Naive thymus-derived CD4-positive, alpha-beta T cell (primary cell): ENCODE measurements at regions of chr12 and their contacts with region 1.

Region 1: DNA sequence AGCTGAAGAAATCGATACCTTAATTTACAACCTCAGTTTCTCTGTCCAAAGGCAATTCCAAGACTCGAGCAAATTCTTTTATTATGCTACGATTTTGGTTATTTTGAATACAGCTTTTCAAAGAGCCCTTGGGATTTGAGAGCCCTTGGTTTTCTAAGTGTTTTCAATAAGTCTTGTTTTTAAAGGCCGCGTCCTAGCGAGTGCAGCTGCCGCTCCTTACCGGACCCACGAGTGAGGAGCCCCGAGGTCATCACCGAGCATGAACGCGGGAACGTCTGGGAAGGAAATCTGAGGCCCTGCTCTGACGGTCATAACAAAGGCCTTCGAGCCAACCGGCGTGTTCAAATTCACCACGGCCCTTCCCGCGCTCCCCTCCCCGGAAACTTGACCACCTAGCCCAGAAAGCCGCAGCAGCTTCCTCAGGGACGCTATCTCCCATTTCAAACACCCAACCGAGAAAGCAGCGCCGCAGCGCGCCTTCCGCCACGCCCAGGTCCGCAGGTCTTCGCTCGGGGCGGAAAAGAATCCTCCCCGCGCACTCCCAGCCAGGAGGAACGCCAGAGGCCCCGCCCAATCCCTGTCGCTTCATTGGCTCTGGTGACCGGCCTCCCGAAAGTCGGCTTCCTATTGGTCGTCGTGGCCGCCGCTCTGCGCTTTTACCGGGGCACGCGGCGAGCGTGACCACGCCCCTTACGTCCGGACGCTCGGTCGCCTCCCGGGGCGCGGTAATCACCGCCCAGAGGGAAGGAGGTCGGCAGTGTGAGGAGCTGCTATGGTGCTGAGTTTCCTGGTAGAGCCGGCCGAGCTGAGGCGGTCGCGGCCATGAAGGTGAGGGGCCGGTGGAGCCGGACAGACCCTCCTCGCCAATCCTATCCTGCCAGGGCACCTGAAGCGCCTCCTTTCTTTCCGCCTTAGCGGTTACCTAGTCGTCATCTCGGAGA is at the start of gene RNF34:
- DNase-seq: peak; percentile 88 to 98 (median 97)
- ATAC-seq: peak; percentile 96
- H3K4me3 ChIP-seq: peak within 1 kb of the TSS; percentile 93
- H3K4me3 Mint-ChIP-seq: peak within 1 kb of the TSS; percentile 89 to 99 (median 94)
- H3K27ac ChIP-seq: peak within 1 kb of the TSS; percentile 91
- H3K27ac Mint-ChIP-seq: peak within 1 kb of the TSS; percentile 91 to 97 (median 94)
- H3K4me1 ChIP-seq: peaks cover 20 to 26% of the 10 kb centered on the region in 2 donors
- H3K4me1 Mint-ChIP-seq: peaks cover 29 to 52% (median 39%) of the 10 kb centered on the region in 7 donors
- H3K27me3 ChIP-seq: no peaks in the 10 kb centered on the region
- H3K27me3 Mint-ChIP-seq: no peaks in the 10 kb centered on the region
- total RNA-seq, gene RNF34: 61.1 to 98.4 (median 81.7) TPM

Region 2: DNA sequence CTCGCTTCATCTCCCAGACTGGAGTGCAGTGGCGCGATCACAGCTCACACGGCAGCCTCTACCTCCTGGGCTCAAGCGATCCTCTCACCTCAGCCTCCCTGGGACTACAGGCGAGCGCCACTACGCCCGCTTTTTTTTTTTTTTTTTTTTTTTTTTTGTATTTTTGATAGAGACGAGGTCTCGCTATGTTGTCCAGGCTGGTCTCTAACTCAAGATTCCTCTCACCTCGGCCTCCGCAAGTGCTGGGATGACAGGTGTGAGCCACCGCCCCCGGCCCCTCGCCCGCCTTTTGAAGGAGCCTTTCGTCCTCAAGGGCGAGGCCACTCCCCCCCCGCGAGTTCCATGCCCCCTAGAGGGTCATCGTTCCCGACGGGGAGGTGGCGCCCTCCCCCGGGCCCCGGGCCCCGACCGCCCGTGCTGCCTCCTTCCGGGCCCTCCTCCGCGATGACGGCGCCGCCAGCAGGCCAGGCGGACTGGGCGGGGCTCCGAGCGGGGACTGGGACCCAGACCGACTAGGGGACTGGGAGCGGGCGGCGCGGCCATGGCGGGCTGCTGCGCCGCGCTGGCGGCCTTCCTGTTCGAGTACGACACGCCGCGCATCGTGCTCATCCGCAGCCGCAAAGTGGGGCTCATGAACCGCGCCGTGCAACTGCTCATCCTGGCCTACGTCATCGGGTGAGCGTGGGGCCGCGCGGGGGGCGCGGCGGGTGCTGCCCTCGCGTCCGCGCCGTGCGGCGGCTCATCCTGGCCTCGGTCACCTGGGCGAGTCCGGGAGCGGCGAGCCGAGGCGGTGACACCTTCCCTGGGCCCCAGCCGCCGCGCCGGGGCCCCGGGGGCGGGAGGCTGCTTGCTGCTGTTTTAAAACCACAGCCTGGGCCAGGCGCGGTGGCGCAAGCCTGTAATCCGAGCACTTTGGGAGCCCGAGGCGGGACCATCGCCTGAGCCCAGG is 189.8 kb before region 1 on chr12 and contains the start of gene P2RX4:
- CTCF ChIA-PET with region 1: no interaction called
- POLR2A ChIA-PET with region 1: no interaction called
- intact Hi-C with region 1: loop called in 1 of 2 experiments (anchors 1 kb)
- DNase-seq: peak; percentile 77 to 90 (median 88)
- ATAC-seq: peak; percentile 87
- H3K4me3 ChIP-seq: peak within 1 kb of the TSS; percentile 85
- H3K4me3 Mint-ChIP-seq: peak within 1 kb of the TSS; percentile 79 to 96 (median 94)
- H3K27ac ChIP-seq: peak within 1 kb of the TSS; percentile 89
- H3K27ac Mint-ChIP-seq: peak within 1 kb of the TSS; percentile 90 to 100 (median 93)
- H3K4me1 ChIP-seq: peaks cover 10 to 20% of the 10 kb centered on the region in 2 donors
- H3K4me1 Mint-ChIP-seq: peaks cover 15 to 45% (median 26%) of the 10 kb centered on the region in 7 donors
- H3K27me3 ChIP-seq: no peaks in the 10 kb centered on the region
- H3K27me3 Mint-ChIP-seq: no peaks in the 10 kb centered on the region
- total RNA-seq, gene P2RX4: 34.1 to 56.9 (median 40.5) TPM

Region 3: GRCh38 chr12:121296618-121297434 is 102.8 kb before region 1 on chr12 and contains the start of gene CAMKK2:
- CTCF ChIA-PET with region 1: no interaction called
- POLR2A ChIA-PET with region 1: interaction called, 8 read pairs
- intact Hi-C with region 1: loop called in 1 of 2 experiments (anchors 2 kb)
- DNase-seq: peak; percentile 84 to 95 (median 92)
- ATAC-seq: peak; percentile 94
- H3K4me3 ChIP-seq: peak within 1 kb of the TSS; percentile 87
- H3K4me3 Mint-ChIP-seq: peak within 1 kb of the TSS; percentile 86 to 93 (median 89)
- H3K27ac ChIP-seq: peak within 1 kb of the TSS; percentile 80
- H3K27ac Mint-ChIP-seq: peak within 1 kb of the TSS; percentile 55 to 91 (median 81)
- H3K4me1 ChIP-seq: peaks cover 12 to 14% of the 10 kb centered on the region in 2 donors
- H3K4me1 Mint-ChIP-seq: peaks cover 0 to 43% (median 19%) of the 10 kb centered on the region in 7 donors
- H3K27me3 ChIP-seq: no peaks in the 10 kb centered on the region
- H3K27me3 Mint-ChIP-seq: peaks cover 0 to 4% (median 0%) of the 10 kb centered on the region in 5 donors
- total RNA-seq, gene CAMKK2: 15.5 to 38.7 (median 18.1) TPM

Region 4: DNA sequence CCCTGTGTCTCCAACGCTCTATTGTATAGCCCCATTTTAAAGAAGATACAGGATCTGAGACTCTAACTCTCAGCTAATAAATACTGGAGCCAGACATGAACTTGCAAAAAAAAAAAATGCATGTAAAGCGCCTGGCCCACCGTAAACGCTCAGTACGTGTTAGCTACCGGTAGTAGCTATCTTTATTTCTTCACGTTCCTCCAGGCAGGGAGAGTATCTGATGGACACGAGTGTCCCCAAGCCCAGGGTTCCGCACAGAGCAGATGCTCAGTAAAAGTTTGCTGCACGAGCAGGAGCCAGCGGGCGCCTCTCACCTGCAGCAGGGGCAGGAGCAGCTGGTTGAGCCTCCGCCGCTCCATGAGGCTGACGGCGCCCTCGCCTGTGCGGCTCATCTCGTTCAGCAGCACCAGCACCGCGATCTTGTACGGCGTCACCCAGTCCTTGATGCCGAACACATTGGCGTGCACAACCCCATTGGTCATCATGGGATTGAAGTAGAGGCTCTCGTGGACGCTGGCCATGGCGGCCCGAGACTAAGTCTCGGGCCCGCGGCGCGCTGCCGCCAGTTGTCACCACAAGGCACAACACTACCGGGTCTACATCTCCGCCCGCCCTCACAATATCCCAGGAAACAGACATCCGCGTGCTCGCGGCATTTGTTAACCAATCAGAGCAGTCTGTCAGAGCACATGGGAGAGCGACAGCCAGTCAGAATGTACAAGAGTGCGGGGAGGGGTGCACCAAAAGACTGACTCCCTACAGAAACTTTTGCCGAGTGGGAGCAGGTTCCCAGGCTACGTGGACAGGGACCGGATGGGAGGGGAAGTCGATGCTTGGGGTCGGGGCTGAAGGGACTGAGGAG is 47.6 kb before region 1 on chr12 and contains the start of gene ANAPC5:
- CTCF ChIA-PET with region 1: interaction called, 3 read pairs
- POLR2A ChIA-PET with region 1: interaction called, 45 read pairs
- intact Hi-C with region 1: loop called (anchors 1 kb)
- DNase-seq: peak; percentile 61 to 93 (median 89)
- ATAC-seq: peak; percentile 99
- H3K4me3 ChIP-seq: peak within 1 kb of the TSS; percentile 99
- H3K4me3 Mint-ChIP-seq: peak within 1 kb of the TSS; percentile 88 to 100 (median 97)
- H3K27ac ChIP-seq: peak within 1 kb of the TSS; percentile 78
- H3K27ac Mint-ChIP-seq: peak within 1 kb of the TSS; percentile 90 to 100 (median 98)
- H3K4me1 ChIP-seq: peaks cover 6 to 7% of the 10 kb centered on the region in 2 donors
- H3K4me1 Mint-ChIP-seq: peaks cover 25 to 58% (median 42%) of the 10 kb centered on the region in 7 donors
- H3K27me3 ChIP-seq: no peaks in the 10 kb centered on the region
- H3K27me3 Mint-ChIP-seq: peaks cover 0 to 5% (median 0%) of the 10 kb centered on the region in 5 donors
- total RNA-seq, gene ANAPC5: 114 to 148 (median 141) TPM

Region 5: GRCh38 chr12:121590476-121591143 is 190.9 kb after region 1 on chr12:
- CTCF ChIA-PET with region 1: no interaction called
- POLR2A ChIA-PET with region 1: no interaction called
- intact Hi-C with region 1: loop called in 1 of 2 experiments (anchors 1 kb)
- DNase-seq: peak; percentile 38 to 88 (median 83)
- ATAC-seq: peak; percentile 81
- H3K4me3 ChIP-seq: peak overlapping the region; percentile 76
- H3K4me3 Mint-ChIP-seq: peak overlapping the region; percentile 59 to 94 (median 90)
- H3K27ac ChIP-seq: peak overlapping the region; percentile 90
- H3K27ac Mint-ChIP-seq: peak overlapping the region; percentile 97 to 100 (median 99)
- H3K4me1 ChIP-seq: peaks cover 24 to 26% of the 10 kb centered on the region in 2 donors
- H3K4me1 Mint-ChIP-seq: peaks cover 16 to 53% (median 38%) of the 10 kb centered on the region in 7 donors
- H3K27me3 ChIP-seq: no peaks in the 10 kb centered on the region
- H3K27me3 Mint-ChIP-seq: peaks cover 0 to 3% (median 0%) of the 10 kb centered on the region in 5 donors